ENCODE measurements at regions of chr15 and their contacts with region 1.

Region 1: GRCh38 chr15:81274931-81275707 is 48.8 kb downstream of the STARD5 start:
- DNase-seq: peak; percentile 60
- ATAC-seq: peak; percentile 89
- H3K4me3 Mint-ChIP-seq: no peak overlapping the region
- H3K27ac Mint-ChIP-seq: peak overlapping the region; percentile 46
- H3K4me1 Mint-ChIP-seq: peaks cover 19% of the 10 kb centered on the region
- H3K27me3 Mint-ChIP-seq: no peaks in the 10 kb centered on the region
- CTCF ChIP-seq: peak; percentile 74

Region 2: DNA sequence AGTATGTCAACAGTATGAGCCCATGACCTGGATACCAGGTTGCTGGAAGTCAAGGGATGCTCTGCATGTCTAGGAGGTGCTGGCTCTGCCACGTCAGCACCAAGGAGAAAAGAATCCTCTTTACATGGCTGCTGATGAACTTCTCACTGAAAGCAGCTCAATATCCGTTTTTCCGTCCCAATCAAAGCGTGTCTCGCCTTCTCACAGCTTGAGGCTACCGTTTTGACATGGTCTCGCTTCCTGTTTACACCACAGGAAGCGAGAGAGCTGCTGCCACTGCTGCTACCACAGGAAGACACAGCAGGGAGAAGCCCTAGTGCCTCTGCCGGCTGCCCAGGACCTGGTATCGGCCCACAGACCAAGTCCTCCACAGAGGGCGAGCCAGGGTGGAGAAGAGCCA is 21.6 kb after region 1 on chr15:
- CTCF ChIA-PET with region 1: interaction called, 82 read pairs
- POLR2A ChIA-PET with region 1: interaction called, 61 read pairs
- intact Hi-C with region 1: loop called (anchors 1 kb)
- DNase-seq: peak; percentile 56
- ATAC-seq: peak; percentile 32
- H3K4me3 Mint-ChIP-seq: peak overlapping the region; percentile 99
- H3K27ac Mint-ChIP-seq: peak overlapping the region; percentile 99
- H3K4me1 Mint-ChIP-seq: peaks cover 98% of the 10 kb centered on the region
- H3K27me3 Mint-ChIP-seq: no peaks in the 10 kb centered on the region
- CTCF ChIP-seq: no peak

Region 3: GRCh38 chr15:81312790-81313543 is 37.8 kb after region 1 on chr15:
- CTCF ChIA-PET with region 1: interaction called, 15 read pairs
- POLR2A ChIA-PET with region 1: interaction called, 4 read pairs
- intact Hi-C with region 1: loop called (anchors 1 kb)
- DNase-seq: no peak
- ATAC-seq: no peak
- H3K4me3 Mint-ChIP-seq: peak overlapping the region; percentile 50
- H3K27ac Mint-ChIP-seq: peak overlapping the region; percentile 94
- H3K4me1 Mint-ChIP-seq: peaks cover 88% of the 10 kb centered on the region
- H3K27me3 Mint-ChIP-seq: no peaks in the 10 kb centered on the region
- CTCF ChIP-seq: no peak

Region 4: DNA sequence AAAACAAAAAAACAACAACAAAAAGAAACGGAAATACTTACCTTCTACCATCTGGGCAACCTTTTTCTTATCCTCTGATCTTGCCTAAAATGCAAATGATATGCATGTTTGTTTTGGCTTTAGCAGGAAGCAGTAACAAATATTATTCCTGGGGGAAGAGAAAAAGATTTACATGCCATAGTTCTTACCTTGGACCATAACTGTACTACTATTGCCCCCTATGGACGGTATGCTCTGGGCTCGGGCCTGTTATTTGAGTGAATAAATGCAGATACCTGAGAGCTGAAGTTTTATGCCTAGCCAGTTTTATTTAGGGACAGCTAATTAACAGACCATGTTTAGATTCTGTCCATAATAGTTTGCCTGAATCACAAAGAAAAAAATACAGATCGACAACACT is 61.4 kb after region 1 on chr15:
- CTCF ChIA-PET with region 1: interaction called, 158 read pairs
- POLR2A ChIA-PET with region 1: interaction called, 9 read pairs
- intact Hi-C with region 1: loop called (anchors 1 kb)
- DNase-seq: no peak
- ATAC-seq: peak; percentile 61
- H3K4me3 Mint-ChIP-seq: no peak overlapping the region
- H3K27ac Mint-ChIP-seq: no peak overlapping the region
- H3K4me1 Mint-ChIP-seq: peaks cover 12% of the 10 kb centered on the region
- H3K27me3 Mint-ChIP-seq: no peaks in the 10 kb centered on the region
- CTCF ChIP-seq: no peak

Region 5: GRCh38 chr15:81410318-81410753 is 135.2 kb after region 1 on chr15:
- CTCF ChIA-PET with region 1: interaction called, 13 read pairs
- POLR2A ChIA-PET with region 1: no interaction called
- intact Hi-C with region 1: no loop called
- DNase-seq: no peak
- ATAC-seq: no peak
- H3K4me3 Mint-ChIP-seq: no peak overlapping the region
- H3K27ac Mint-ChIP-seq: no peak overlapping the region
- H3K4me1 Mint-ChIP-seq: no peaks in the 10 kb centered on the region
- H3K27me3 Mint-ChIP-seq: peaks cover 31% of the 10 kb centered on the region
- CTCF ChIP-seq: no peak

Region 6: DNA sequence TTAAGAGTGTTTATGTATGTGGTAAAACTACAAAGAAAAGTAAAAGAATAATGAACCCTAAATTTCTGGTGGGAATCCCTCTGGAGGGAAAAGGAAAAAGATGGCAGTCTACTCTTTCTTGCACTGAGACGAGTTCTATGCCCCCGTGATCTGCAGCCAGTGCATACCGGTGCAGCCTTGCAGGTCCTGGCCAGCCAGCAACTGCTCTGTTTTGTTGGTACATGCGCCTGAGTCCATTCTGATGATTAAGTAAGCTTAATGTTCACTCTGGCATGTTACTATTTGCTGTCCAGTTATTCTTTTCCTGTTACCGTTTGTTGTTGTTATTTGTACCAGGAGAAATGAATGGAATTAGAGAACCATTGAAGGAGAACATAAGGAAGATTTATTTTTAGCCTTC is 194.0 kb after region 1 on chr15:
- CTCF ChIA-PET with region 1: no interaction called
- POLR2A ChIA-PET with region 1: no interaction called
- intact Hi-C with region 1: no loop called
- DNase-seq: no peak
- ATAC-seq: no peak
- H3K4me3 Mint-ChIP-seq: no peak overlapping the region
- H3K27ac Mint-ChIP-seq: no peak overlapping the region
- H3K4me1 Mint-ChIP-seq: no peaks in the 10 kb centered on the region
- H3K27me3 Mint-ChIP-seq: peaks cover 12% of the 10 kb centered on the region
- CTCF ChIP-seq: no peak

Measured in activated B cell treated with CpG ODN at 0.5 μM for 24 hours (primary cell).